ENCODE measurements at regions of chr7 and their contacts with region 1.

Region 1: DNA sequence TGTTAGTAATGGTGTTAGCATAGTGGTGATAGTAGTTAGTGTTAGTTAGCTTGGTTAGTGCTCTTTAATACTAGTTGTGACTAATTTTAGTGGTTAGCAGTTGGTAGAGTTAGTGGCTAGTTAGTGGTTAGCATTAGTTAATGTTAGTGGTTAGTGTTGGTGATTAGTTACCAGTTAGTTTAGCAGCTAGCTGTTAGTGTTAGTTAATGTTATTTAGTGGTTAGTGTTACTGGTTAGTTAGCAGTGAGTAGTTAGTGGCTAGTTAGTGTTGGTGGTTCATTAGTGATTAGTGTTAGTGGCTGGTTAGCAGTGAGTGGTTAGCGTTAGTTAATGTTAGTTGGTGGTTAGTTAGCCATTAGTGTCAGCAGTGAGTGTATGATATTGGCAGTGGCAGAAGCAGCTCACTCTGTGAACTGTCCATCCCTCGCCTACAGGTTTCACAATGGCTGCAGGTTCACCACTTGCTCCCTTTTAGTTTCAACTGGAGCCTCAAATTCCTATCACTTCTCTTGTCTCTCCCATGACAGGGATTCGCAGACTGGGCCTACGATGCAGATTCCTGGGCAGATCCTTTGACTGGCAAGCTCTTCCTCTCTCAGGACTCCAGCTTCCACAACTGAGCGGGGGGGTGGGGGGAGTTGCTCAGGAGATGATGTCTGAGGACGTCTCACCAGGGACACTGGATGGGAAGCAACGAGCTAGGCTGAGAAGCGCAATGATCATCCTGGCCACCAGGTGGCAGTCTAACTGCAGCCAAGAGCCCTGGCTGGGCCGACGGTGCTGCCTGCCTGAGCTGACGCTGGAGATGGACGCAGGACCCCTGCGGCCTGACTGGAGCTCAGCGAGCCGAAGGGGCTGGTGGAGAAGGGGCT is 19.5 kb downstream of the GHRHR start:
- DNase-seq: peak; percentile 69
- ATAC-seq: peak; percentile 100
- H3K4me3 ChIP-seq: no peak overlapping the region
- H3K27ac ChIP-seq: no peak overlapping the region
- H3K4me1 ChIP-seq: no peaks in the 10 kb centered on the region
- H3K27me3 ChIP-seq: peaks cover 39% of the 10 kb centered on the region
- CTCF ChIP-seq: peak; percentile 86
- POLR2A ChIP-seq: no peak
- RAD21 ChIP-seq: peak; percentile 84

Region 2: GRCh38 chr7:31043051-31043471 is 59.8 kb after region 1 on chr7:
- CTCF ChIA-PET with region 1: no interaction called
- POLR2A ChIA-PET with region 1: no interaction called
- dilution Hi-C with region 1: no loop called
- in situ Hi-C with region 1: no loop called
- intact Hi-C with region 1: no loop called
- DNase-seq: no peak
- ATAC-seq: no peak
- H3K4me3 ChIP-seq: no peak overlapping the region
- H3K27ac ChIP-seq: no peak overlapping the region
- H3K4me1 ChIP-seq: no peaks in the 10 kb centered on the region
- H3K27me3 ChIP-seq: peaks cover 8% of the 10 kb centered on the region
- CTCF ChIP-seq: no peak
- POLR2A ChIP-seq: no peak
- RAD21 ChIP-seq: no peak

Region 3: DNA sequence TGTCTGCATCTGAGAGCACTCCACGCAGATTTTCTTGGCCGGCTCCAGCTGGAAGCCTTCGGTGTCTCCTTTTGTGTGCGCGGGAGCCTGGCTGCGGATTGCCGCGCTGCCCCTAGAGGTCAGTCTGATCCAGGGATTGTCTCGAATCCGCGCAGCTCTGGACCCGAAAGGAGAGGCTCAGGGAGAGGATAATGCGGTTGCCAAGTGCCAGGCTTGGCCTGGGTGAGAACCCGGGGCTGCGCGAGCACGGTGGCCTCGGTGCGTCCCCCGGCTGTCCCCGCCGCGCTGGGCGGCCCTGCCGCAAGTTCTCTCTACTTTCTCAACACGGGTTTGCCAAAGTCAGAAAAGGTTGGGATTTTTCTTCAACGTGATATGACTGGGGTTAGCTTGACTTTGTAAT is 209.7 kb after region 1 on chr7:
- CTCF ChIA-PET with region 1: no interaction called
- POLR2A ChIA-PET with region 1: no interaction called
- dilution Hi-C with region 1: no loop called
- in situ Hi-C with region 1: no loop called
- intact Hi-C with region 1: loop called (anchors 2 kb)
- DNase-seq: peak; percentile 16
- ATAC-seq: peak; percentile 99
- H3K4me3 ChIP-seq: no peak overlapping the region
- H3K27ac ChIP-seq: no peak overlapping the region
- H3K4me1 ChIP-seq: no peaks in the 10 kb centered on the region
- H3K27me3 ChIP-seq: no peaks in the 10 kb centered on the region
- CTCF ChIP-seq: peak; percentile 50
- POLR2A ChIP-seq: no peak
- RAD21 ChIP-seq: peak; percentile 48

Measured in IMR-90 (cell line).